Head of caudate nucleus (tissue), 42 donors: ENCODE measurements at regions of chr12 and their contacts with region 1.

Region 1: DNA sequence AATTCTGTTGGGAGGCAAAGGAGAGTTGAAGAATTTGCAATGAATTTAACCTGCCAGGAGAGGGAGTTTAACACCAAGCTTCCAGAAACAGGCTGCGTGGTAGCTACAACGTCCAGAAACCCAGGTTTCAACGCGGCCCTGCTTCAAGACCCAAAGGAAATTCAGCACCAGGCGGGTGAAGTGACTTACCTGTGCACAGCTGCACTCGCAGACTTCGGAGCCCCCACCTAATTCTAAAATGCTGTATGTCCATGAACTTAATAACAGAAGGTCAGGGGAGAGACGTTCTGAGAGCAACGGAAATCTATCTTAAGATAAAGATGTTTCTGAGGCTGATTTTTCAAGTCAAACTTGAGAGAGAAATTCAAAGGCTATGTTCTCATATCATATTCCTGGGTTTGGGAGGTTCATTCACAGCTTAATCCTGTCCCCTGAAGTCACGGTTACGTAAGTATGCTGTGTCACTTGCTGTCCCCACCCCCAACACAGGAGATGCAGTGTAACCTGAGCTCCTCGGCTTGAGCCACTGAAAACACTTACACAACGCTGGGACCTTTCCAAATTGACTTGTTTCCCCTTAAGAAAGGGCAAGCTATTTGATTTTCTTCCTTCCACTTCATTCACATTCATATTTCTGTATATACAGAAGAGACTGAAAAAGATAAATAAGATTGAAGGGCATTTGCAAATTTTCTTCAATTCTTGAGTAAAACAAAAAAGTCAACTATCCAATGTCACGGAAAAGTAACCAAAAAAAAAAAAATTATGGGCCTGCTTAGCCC is 22.7 kb downstream of the CLIP1 start:
- DNase-seq: peak; percentile 24 to 81 (median 56)

Region 2: GRCh38 chr12:122471324-122472226 is 71.8 kb after region 1 on chr12:
- intact Hi-C with region 1: loop called (anchors 10 kb)
- DNase-seq: peak in 8 of 42 donors; percentile 3 to 46 (median 26)